Activated T-helper 2 cell treated with anti-CD3 and anti-CD28 coated beads, Interferon-gamma antibody, Interleukin-2, Interleukin-4, amounts not matched to agents 10 μg/mL and 5 μg/mL and 100 μg/mL, durations not matched to agents 14 hours and 24 hours and 36 hours (primary cell): ENCODE measurements at regions of chr16 and their contacts with region 1.

Region 1: DNA sequence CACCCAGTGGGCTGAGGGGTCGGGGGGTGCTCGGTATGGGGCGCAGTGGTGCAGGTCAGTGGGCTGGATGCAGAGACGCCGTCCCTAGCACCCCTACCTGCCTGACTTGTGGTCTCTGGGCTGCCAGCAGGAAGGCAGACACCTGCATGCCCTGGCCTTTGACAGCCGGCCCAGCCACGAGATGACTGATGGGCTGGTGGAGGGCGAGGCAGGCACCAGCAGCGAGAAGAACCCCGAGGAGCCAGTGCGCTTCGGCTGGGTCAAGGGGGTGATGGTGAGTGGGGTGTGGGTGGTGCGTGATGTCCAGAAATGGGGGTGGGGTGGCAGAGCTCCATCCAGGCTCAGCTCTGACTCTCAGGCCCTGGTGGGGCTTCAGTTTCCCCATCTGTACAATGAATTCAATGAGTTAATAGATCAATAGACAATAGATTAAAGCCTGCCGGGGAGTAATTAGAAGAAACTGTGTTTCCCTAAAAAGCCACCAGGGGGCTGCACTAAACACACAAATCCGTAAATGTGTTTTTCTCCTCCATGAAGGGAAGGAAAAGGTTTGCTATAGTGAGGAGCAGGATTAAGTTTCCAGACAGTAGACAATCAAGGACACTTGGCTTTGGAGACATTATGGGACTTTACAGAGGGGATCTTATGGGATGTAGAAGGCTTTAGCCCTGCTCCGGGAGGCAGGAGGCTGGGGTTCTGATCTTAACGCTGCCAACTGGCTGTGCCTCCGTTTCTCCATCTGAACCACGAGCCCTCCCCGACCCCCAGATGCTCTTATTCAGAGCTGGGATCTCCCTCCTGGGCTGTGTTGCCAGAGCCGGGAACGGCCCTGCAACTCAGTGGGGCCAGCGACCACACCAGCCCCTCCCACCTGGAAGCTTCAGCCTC is 2.2 kb downstream of the SLC12A3 start:
- DNase-seq: no peak
- H3K4me3 Mint-ChIP-seq: no peak overlapping the region
- H3K27ac Mint-ChIP-seq: no peak overlapping the region
- H3K4me1 Mint-ChIP-seq: peaks cover 15% of the 10 kb centered on the region
- H3K27me3 Mint-ChIP-seq: no peaks in the 10 kb centered on the region

Region 2: DNA sequence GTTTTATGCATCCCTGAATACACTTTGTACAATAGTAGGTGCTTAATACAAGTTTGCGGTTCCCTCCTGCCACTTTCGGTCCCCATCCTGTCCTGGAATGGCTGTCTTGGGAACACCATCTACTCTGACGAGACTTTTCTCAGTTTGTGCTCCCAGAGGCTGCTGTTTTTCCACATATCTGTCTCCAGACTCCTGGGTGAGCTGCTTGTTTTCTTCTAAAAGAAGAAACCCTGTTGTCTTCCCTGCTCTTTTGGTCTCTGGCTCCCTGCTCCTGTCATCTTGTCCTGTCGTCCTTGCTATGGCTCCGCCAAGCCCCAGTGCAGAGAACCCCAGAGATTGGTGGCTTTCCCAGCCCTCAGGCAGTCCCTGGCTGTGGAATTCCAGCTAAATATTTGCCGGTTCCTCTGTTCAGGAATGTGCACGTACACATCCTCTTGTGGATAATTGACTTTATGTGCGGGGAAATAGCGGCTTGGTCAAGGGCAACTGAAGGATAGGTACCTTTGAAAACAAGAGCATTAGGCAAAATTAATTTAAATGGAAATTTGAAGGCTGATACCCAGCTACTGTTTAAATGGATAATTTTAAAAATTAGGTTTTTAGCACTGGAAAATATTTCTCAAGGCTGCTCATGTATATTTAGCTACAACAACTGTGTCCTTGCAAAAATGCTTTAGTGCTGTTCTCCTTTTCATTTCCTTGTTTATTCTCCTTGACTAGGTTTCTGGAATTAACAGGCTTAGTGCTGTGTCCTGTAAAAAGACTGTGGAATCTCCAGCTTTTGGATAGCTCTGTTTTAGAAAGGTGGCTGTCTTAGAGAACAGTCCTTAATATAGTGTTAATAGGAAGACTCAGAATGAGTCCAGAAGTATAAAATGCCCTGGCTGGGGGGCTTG is 52.4 kb before region 1 on chr16:
- intact Hi-C with region 1: no loop called
- DNase-seq: no peak
- H3K4me3 Mint-ChIP-seq: no peak overlapping the region
- H3K27ac Mint-ChIP-seq: no peak overlapping the region
- H3K4me1 Mint-ChIP-seq: peaks cover 1% of the 10 kb centered on the region
- H3K27me3 Mint-ChIP-seq: no peaks in the 10 kb centered on the region

Region 3: DNA sequence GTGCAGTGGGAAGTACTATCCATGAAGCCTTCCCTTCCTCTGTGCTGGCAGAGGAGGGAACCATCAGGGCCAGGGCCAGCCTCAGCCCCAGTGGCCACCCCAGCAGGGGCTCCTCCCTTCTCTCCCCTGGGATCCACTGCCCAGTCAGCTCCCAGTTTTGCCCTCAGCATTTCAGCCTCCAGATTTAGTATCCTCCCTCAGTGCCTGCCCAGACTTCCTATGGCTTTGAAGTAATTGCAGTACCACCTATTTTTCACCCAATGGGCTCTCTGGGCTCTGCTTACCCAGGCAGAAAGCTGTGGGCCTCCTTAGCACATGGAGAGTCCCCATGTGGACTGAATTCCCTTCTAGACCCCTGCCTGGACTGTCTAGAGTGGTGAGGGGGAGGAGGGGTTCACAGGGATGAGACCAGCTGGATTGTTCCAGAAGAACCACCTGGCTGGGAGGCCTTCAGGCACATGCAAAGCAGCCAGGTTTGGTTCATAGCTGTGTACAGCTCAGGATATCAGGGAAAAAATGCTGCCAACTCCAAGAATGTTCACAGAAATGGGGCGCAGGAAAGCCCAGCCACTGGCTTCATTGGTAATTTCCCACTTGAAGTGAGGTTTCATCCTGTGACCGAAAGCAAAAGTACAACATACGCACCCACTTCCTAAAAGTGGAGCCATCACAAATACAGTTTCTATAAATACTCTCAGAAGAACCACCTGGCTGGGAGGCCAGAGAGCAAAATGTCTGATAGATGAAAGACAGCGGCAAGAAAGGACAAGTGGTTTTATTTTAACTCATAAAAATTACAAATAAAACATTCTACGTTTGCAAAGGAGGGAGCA is 49.6 kb after region 1 on chr16:
- intact Hi-C with region 1: no loop called
- DNase-seq: peak; percentile 39
- H3K4me3 Mint-ChIP-seq: peak overlapping the region; percentile 40
- H3K27ac Mint-ChIP-seq: peak overlapping the region; percentile 85
- H3K4me1 Mint-ChIP-seq: peaks cover 37% of the 10 kb centered on the region
- H3K27me3 Mint-ChIP-seq: no peaks in the 10 kb centered on the region

Region 4: GRCh38 chr16:56950881-56951771 is 83.9 kb after region 1 on chr16:
- intact Hi-C with region 1: loop called (anchors 1 kb)
- DNase-seq: peak; percentile 37
- H3K4me3 Mint-ChIP-seq: no peak overlapping the region
- H3K27ac Mint-ChIP-seq: peak overlapping the region; percentile 4
- H3K4me1 Mint-ChIP-seq: peaks cover 15% of the 10 kb centered on the region
- H3K27me3 Mint-ChIP-seq: no peaks in the 10 kb centered on the region